CD4-positive, alpha-beta memory T cell (primary cell): ENCODE measurements at regions of chr11 and their contacts with region 1.

Region 1: GRCh38 chr11:15074206-15075161 is 1.1 kb downstream of the CALCB start:
- DNase-seq: peak; percentile 74 to 85 (median 76)
- H3K4me3 ChIP-seq: peak overlapping the region; percentile 54 to 57
- H3K4me3 Mint-ChIP-seq: peak overlapping the region; percentile 73 to 90 (median 84)
- H3K27ac ChIP-seq: no peak overlapping the region
- H3K27ac Mint-ChIP-seq: peak overlapping the region; percentile 52 to 79 (median 68)
- H3K4me1 ChIP-seq: peaks cover 17% of the 10 kb centered on the region
- H3K4me1 Mint-ChIP-seq: peaks cover 7 to 21% (median 15%) of the 10 kb centered on the region in 4 donors
- H3K27me3 ChIP-seq: peaks cover 3% of the 10 kb centered on the region
- H3K27me3 Mint-ChIP-seq: peaks cover 1 to 9% of the 10 kb centered on the region in 2 donors

Region 2: DNA sequence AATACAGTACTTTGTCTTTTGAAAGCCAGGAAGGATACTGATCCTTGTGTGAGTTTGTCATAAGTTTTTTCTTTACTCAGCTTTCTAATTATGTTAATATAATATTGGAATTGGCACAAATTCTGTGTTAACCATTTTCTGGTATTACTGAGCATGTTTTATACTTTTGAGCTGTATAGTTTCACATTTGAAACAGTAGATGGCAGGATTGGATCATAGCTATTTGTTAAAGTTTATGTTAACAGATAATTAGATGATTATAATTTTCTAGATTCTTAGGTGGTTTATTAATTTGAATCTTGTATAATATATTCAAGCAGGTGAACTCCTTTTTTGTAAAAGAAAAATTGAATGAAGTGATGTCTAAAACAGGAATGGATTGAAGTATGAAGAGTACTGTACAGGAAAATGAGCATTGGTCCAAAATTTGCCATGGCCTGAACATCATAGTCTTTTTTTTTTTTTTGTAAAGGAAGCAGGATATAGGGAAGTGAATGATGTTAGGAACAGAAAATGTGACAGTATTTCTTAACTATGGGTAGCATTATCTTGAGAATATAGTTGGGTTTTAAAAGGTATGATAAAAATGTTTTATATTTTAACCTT is 284.5 kb before region 1 on chr11:
- CTCF ChIA-PET with region 1: interaction called, 17 read pairs
- POLR2A ChIA-PET with region 1: no interaction called
- intact Hi-C with region 1: loop called (anchors 1 kb)
- DNase-seq: peak in 4 of 5 donors; percentile 9 to 22 (median 17)
- H3K4me3 ChIP-seq: no peak overlapping the region
- H3K4me3 Mint-ChIP-seq: no peak overlapping the region
- H3K27ac ChIP-seq: no peak overlapping the region
- H3K27ac Mint-ChIP-seq: peak overlapping the region in 4 of 7 donors; percentile 30 to 57 (median 45)
- H3K4me1 ChIP-seq: no peaks in the 10 kb centered on the region
- H3K4me1 Mint-ChIP-seq: peaks cover 0 to 4% (median 2%) of the 10 kb centered on the region in 4 donors
- H3K27me3 ChIP-seq: no peaks in the 10 kb centered on the region
- H3K27me3 Mint-ChIP-seq: no peaks in the 10 kb centered on the region

Region 3: DNA sequence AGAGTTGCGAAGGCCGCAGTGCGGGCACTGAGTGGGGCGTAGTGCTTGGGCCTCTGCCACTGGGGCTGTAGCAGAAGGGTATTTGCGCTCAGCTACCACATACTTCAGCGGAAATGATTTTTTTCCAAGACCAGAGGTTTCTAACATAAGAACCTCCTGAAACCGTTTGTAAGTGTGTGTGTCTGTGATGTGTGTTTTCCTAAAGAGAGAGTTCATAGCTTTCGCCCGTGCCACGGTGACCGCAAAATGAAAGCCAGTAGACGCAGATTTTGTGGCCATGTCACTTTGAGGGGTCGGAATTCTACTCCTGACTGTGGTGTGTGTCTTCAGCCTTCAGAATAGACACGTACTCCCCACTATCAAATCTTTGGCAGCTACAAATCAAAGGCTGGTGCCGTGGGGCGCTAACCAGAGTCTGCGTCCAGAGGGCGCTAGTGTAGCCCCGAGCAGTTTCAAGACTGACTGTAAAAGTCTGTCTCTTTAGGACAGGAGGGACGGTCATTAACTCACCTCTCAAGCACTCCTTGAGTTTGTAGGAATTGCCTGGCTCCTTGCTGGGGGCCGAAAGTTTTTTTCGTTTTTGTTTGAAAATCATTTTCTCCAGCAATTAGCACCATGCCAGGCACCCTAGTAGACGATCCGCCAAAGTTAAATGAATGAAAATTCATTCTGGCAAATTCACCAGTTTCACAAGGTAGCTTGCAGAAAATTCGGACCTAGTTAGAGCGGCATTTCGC is 99.8 kb before region 1 on chr11:
- CTCF ChIA-PET with region 1: interaction called, 14 read pairs
- POLR2A ChIA-PET with region 1: no interaction called
- intact Hi-C with region 1: loop called (anchors 1 kb)
- DNase-seq: peak; percentile 42 to 56 (median 52)
- H3K4me3 ChIP-seq: peak overlapping the region; percentile 0 to 1
- H3K4me3 Mint-ChIP-seq: peak overlapping the region; percentile 73 to 88 (median 85)
- H3K27ac ChIP-seq: no peak overlapping the region
- H3K27ac Mint-ChIP-seq: peak overlapping the region in 1 of 7 donors; percentile 30
- H3K4me1 ChIP-seq: peaks cover 28% of the 10 kb centered on the region
- H3K4me1 Mint-ChIP-seq: peaks cover 14 to 39% (median 23%) of the 10 kb centered on the region in 4 donors
- H3K27me3 ChIP-seq: peaks cover 48% of the 10 kb centered on the region
- H3K27me3 Mint-ChIP-seq: peaks cover 44 to 45% of the 10 kb centered on the region in 2 donors

Region 4: DNA sequence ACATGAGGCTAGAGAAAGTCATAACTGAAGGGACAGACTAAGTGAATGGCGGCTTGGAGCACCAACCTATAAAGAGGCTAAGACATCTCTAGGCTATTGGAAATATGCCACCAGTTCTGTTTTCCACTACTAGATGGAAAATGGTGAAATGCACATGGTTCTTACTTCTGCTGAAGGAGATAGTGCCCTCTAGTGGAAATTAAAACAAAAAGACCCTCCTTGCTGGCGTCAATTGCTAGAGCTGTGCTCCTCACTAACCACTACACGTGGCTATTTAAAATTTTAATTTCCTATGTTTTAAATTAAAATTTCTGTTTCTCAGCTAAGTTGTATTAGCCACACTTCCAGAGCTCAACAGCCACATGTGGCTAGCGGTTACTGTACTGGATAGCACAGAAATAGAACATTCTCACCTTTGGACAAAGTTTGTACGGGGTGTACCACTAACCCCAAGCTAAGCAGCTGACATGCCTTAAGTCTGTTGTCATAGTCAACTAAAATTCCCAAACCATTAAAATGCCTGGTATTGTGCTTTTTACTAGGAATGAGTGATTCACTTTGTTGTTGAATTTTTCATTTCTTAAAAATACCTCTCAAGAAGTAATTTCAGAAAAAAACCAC is 68.2 kb before region 1 on chr11:
- CTCF ChIA-PET with region 1: interaction called, 6 read pairs
- POLR2A ChIA-PET with region 1: no interaction called
- intact Hi-C with region 1: loop called (anchors 2 kb)
- DNase-seq: peak in 4 of 5 donors; percentile 30 to 48 (median 39)
- H3K4me3 ChIP-seq: no peak overlapping the region
- H3K4me3 Mint-ChIP-seq: no peak overlapping the region
- H3K27ac ChIP-seq: no peak overlapping the region
- H3K27ac Mint-ChIP-seq: no peak overlapping the region
- H3K4me1 ChIP-seq: no peaks in the 10 kb centered on the region
- H3K4me1 Mint-ChIP-seq: no peaks in the 10 kb centered on the region
- H3K27me3 ChIP-seq: no peaks in the 10 kb centered on the region
- H3K27me3 Mint-ChIP-seq: peaks cover 14 to 26% of the 10 kb centered on the region in 2 donors

Region 5: GRCh38 chr11:15048616-15049015 is 25.9 kb before region 1 on chr11:
- CTCF ChIA-PET with region 1: interaction called, 13 read pairs
- POLR2A ChIA-PET with region 1: no interaction called
- intact Hi-C with region 1: no loop called
- DNase-seq: no peak
- H3K4me3 ChIP-seq: no peak overlapping the region
- H3K4me3 Mint-ChIP-seq: no peak overlapping the region
- H3K27ac ChIP-seq: no peak overlapping the region
- H3K27ac Mint-ChIP-seq: no peak overlapping the region
- H3K4me1 ChIP-seq: no peaks in the 10 kb centered on the region
- H3K4me1 Mint-ChIP-seq: no peaks in the 10 kb centered on the region
- H3K27me3 ChIP-seq: no peaks in the 10 kb centered on the region
- H3K27me3 Mint-ChIP-seq: peaks cover 6 to 13% of the 10 kb centered on the region in 2 donors